IMR-90 (cell line): ENCODE measurements at regions of chr15 and their contacts with region 1.

Region 1: DNA sequence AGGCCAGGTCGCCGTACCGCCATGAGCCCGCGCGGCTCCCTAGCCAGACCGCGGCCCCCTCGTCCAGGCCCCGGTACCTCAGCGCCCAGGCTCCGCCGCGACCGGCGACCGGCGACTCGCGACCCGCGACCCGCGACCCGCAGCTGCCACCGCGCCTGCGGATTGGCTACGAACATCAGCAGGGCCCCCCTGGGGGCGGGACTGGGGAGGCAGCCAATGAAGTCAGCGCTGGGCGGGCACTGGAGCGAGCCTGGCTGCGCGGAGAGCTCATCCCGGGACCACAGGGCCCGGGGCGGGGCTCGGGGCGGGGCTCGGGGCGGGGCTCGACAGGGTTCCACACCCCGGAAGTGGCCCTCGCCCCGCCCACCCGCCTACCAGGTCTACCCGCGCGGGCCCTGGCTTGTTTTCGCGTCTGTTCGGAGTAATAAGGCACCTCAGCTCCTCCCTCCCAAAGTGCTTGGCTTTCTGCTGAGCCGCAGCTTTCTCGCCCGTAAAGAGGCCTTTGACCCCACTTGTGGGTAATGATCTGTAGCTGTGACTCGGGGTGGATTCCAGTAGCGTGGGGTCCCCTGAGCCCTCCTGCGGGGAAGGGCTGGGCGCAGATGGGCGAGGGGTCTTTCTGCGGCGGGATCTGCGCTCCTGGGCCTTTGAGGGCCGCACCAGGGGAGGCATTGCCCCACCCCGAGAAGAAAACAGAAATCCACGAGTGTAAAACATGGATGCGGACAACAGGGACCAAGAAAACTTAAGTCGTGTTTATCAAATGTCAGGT is at the start of gene LYSMD4:
- DNase-seq: peak; percentile 88
- ATAC-seq: peak; percentile 99
- H3K4me3 ChIP-seq: peak within 1 kb of the TSS; percentile 90
- H3K27ac ChIP-seq: peak within 1 kb of the TSS; percentile 41
- H3K4me1 ChIP-seq: peaks cover 4% of the 10 kb centered on the region
- H3K27me3 ChIP-seq: 0 out of 2 replicates have a peak, but pooled peaks cover 3% of the 10 kb centered on the region
- CTCF ChIP-seq: no peak
- POLR2A ChIP-seq: no peak
- RAD21 ChIP-seq: no peak
- total RNA-seq, gene LYSMD4: 4.5 and 5.6 TPM in 2 replicates

Region 2: DNA sequence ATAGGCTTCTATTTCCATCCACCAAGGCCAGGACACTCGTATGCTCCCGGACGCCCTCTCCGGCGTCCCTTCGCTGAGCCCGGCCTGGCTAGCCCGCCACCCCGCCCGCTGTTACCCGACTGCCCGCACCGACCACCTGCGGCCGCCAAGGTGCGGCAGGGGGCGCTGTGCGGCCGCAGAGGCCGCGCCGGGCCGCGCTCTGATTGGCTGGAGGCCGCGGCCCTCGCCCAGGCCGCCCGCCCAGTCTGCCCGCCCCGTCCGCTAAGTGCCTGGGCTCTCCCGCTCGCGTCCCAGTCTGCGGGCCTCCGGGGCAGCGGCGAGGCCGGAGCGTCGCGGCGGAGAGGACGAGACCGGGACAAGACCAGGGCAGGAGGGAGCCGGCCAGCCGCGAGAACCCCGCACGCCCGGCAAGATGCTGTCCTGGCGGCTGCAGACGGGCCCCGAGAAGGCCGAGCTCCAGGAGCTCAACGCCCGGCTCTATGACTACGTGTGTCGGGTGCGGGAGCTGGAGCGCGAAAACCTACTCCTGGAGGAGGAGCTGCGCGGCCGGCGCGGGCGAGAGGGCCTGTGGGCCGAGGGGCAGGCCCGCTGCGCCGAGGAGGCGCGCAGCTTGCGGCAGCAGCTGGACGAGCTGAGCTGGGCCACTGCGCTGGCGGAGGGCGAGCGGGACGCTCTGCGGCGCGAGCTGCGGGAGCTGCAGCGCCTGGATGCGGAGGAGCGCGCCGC is 628.5 kb before region 1 on chr15 and contains the start of gene SYNM:
- CTCF ChIA-PET with region 1: no interaction called
- POLR2A ChIA-PET with region 1: interaction called, 3 read pairs
- dilution Hi-C with region 1: no loop called
- in situ Hi-C with region 1: loop called (anchors 25 kb)
- intact Hi-C with region 1: loop called (anchors 5 kb)
- DNase-seq: peak; percentile 72
- ATAC-seq: peak; percentile 76
- H3K4me3 ChIP-seq: peak within 1 kb of the TSS; percentile 60
- H3K27ac ChIP-seq: no peak within 1 kb of the TSS
- H3K4me1 ChIP-seq: peaks cover 1% of the 10 kb centered on the region; the same call in 1 of the 2 replicates
- H3K27me3 ChIP-seq: peaks cover 6% of the 10 kb centered on the region
- CTCF ChIP-seq: peak; percentile 89
- POLR2A ChIP-seq: peak; percentile 83
- RAD21 ChIP-seq: peak; percentile 70
- total RNA-seq, gene SYNM: 3.4 and 5.0 TPM in 2 replicates

Region 3: DNA sequence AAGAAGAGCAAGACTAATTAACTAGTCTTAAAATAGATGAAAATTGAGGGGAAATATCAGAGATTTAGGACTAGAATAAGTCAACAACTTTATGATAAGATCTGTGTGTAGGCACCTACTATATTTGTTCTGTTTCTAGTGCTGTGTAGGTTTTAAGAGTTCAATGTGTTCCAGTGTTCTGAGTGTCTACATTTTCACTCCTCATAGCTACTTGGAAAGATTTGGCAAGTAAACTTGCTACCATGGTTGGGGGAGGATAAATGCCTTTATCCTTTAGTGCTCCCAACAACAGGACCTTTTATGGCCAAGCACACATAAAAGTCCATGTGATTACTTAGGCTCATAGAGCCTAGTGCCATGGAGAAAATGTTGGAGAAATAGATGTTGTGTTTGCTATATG is 64.2 kb before region 1 on chr15:
- CTCF ChIA-PET with region 1: no interaction called
- POLR2A ChIA-PET with region 1: no interaction called
- dilution Hi-C with region 1: no loop called
- in situ Hi-C with region 1: no loop called
- intact Hi-C with region 1: no loop called
- DNase-seq: no peak
- ATAC-seq: no peak
- H3K4me3 ChIP-seq: no peak overlapping the region
- H3K27ac ChIP-seq: no peak overlapping the region
- H3K4me1 ChIP-seq: no peaks in the 10 kb centered on the region
- H3K27me3 ChIP-seq: no peaks in the 10 kb centered on the region
- CTCF ChIP-seq: no peak
- POLR2A ChIP-seq: no peak
- RAD21 ChIP-seq: no peak

Region 4: DNA sequence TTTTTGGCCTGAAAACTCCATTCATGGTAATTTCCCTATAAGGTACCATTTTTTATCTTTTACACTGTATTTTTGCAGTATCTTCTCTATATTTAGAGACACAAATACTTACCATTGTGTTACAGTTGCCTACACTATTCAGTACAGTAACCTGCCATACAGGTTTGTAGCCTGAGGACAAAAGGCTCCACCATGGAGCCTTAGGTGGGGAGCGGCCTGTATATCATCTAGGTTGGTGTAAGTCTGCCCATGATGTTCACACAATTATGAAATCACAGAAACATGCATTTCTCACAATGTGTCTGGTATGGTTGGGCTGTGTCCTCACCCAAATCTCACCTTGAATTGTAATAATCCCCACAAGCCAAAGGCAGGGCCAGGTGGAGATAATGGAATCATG is 43.7 kb after region 1 on chr15:
- CTCF ChIA-PET with region 1: no interaction called
- POLR2A ChIA-PET with region 1: no interaction called
- dilution Hi-C with region 1: no loop called
- in situ Hi-C with region 1: no loop called
- intact Hi-C with region 1: no loop called
- DNase-seq: no peak
- ATAC-seq: no peak
- H3K4me3 ChIP-seq: no peak overlapping the region
- H3K27ac ChIP-seq: no peak overlapping the region
- H3K4me1 ChIP-seq: no peaks in the 10 kb centered on the region
- H3K27me3 ChIP-seq: peaks cover 5% of the 10 kb centered on the region
- CTCF ChIP-seq: no peak
- POLR2A ChIP-seq: no peak
- RAD21 ChIP-seq: no peak